PC-9 (cell line): ENCODE measurements at regions of chr5 and their contacts with region 1.

Region 1: GRCh38 chr5:6889030-6889429 is 175.8 kb downstream of the TENT4A start:
- DNase-seq: no peak
- H3K4me3 ChIP-seq: no peak overlapping the region
- H3K27ac ChIP-seq: no peak overlapping the region
- H3K4me1 ChIP-seq: no peaks in the 10 kb centered on the region
- H3K27me3 ChIP-seq: peaks cover 64% of the 10 kb centered on the region
- CTCF ChIP-seq: no peak

Region 2: GRCh38 chr5:6228257-6229250 is 660.5 kb before region 1 on chr5:
- CTCF ChIA-PET with region 1: no interaction called
- POLR2A ChIA-PET with region 1: no interaction called
- intact Hi-C with region 1: no loop called
- DNase-seq: no peak
- H3K4me3 ChIP-seq: no peak overlapping the region; the same call in 1 of the 2 replicates
- H3K27ac ChIP-seq: no peak overlapping the region
- H3K4me1 ChIP-seq: no peaks in the 10 kb centered on the region
- H3K27me3 ChIP-seq: peaks cover 8% of the 10 kb centered on the region
- CTCF ChIP-seq: no peak

Region 3: GRCh38 chr5:6704361-6704851 is 184.6 kb before region 1 on chr5:
- CTCF ChIA-PET with region 1: no interaction called
- POLR2A ChIA-PET with region 1: no interaction called
- intact Hi-C with region 1: no loop called
- DNase-seq: peak; percentile 52 to 78
- H3K4me3 ChIP-seq: no peak overlapping the region; the same call in 1 of the 2 replicates
- H3K27ac ChIP-seq: peak overlapping the region; percentile 46
- H3K4me1 ChIP-seq: peaks cover 26% of the 10 kb centered on the region
- H3K27me3 ChIP-seq: no peaks in the 10 kb centered on the region
- CTCF ChIP-seq: no peak

Region 4: GRCh38 chr5:6785161-6785864 is 103.7 kb before region 1 on chr5:
- CTCF ChIA-PET with region 1: no interaction called
- POLR2A ChIA-PET with region 1: interaction called, 16 read pairs
- intact Hi-C with region 1: no loop called
- DNase-seq: peak in 1 of 2 experiments; percentile 24
- H3K4me3 ChIP-seq: no peak overlapping the region
- H3K27ac ChIP-seq: no peak overlapping the region
- H3K4me1 ChIP-seq: no peaks in the 10 kb centered on the region
- H3K27me3 ChIP-seq: no peaks in the 10 kb centered on the region
- CTCF ChIP-seq: no peak